Right ventricle myocardium inferior (tissue), 1 donor: ENCODE measurements at regions of chr13 and their contacts with region 1.

Region 1: GRCh38 chr13:52617070-52618060 is 24.9 kb upstream of the HNRNPA1L2 start:
- DNase-seq: peak; percentile 83
- ATAC-seq: peak; percentile 96

Region 2: DNA sequence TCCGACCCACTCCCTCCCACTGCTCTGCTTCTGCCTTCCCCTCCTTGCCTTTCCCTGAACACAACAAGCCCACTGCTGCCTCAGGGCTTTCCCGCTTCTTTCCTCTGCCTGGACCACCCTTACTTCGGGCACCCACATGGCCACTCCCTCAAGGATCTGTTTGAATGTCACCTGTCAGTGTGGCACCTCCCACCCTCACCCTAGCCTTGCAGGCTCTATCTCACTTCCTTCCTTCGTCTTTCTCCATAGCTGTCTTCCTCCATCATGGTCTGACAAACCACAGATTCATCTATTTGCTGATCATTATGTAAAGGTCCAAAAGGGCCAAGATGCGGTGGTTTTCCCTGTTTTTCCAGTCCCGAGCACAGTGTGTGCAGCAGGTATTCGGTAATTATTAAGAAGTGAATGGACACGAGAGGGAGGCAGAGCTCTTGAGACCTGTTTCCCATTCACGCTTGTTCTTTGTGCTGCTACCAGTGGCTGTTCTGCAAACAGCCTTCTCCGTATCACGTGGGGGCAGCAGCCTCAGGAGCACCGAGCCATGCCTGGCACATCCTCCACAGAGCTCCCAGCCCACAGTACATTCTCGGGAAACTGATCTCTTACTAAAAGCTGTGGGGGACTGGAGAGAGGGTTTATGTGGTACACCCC is 705.4 kb before region 1 on chr13:
- intact Hi-C with region 1: no loop called
- DNase-seq: no peak
- ATAC-seq: peak; percentile 59

Region 3: DNA sequence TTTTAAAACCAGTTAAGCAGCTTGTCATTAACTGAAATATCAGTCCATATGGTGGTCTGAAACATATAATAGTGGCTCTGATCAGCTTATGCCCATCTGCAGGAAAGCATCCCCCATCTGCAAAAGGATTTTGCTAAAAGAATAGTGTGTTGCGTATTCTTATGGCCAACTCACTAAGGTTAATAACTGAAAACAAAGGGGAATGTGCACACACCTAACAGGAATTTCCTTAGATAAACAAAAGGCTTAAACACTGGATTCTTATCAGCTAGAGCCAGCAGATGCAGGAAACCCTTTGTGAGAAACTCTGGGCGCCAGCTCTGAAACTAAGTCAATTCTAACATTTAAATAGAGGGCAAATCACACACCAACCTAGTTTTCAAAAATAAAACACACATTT is 189.1 kb before region 1 on chr13:
- intact Hi-C with region 1: no loop called
- DNase-seq: no peak
- ATAC-seq: no peak

Region 4: GRCh38 chr13:52652196-52652979 is 35.0 kb after region 1 on chr13 and contains the start of gene SUGT1:
- intact Hi-C with region 1: loop called (anchors 5 kb)
- DNase-seq: peak; percentile 99
- ATAC-seq: peak; percentile 100
- total RNA-seq, gene SUGT1: 55.5 TPM

Region 5: GRCh38 chr13:52695856-52696255 is 78.5 kb after region 1 on chr13:
- intact Hi-C with region 1: no loop called
- DNase-seq: no peak
- ATAC-seq: no peak